ENCODE measurements at regions of chr4 and their contacts with region 1.

Region 1: GRCh38 chr4:186029571-186030398 is 39.2 kb upstream of the TLR3 start:
- DNase-seq: no peak
- H3K4me3 ChIP-seq: peak overlapping the region; percentile 20 to 37 (median 29)
- H3K27ac ChIP-seq: peak overlapping the region; percentile 82 to 87 (median 86)
- H3K4me1 ChIP-seq: peaks cover 30 to 78% (median 76%) of the 10 kb centered on the region in 4 donors
- H3K27me3 ChIP-seq: no peaks in the 10 kb centered on the region
- CTCF ChIP-seq: no peak
- EP300 ChIP-seq: peak; percentile 5
- POLR2A ChIP-seq: no peak

Region 2: DNA sequence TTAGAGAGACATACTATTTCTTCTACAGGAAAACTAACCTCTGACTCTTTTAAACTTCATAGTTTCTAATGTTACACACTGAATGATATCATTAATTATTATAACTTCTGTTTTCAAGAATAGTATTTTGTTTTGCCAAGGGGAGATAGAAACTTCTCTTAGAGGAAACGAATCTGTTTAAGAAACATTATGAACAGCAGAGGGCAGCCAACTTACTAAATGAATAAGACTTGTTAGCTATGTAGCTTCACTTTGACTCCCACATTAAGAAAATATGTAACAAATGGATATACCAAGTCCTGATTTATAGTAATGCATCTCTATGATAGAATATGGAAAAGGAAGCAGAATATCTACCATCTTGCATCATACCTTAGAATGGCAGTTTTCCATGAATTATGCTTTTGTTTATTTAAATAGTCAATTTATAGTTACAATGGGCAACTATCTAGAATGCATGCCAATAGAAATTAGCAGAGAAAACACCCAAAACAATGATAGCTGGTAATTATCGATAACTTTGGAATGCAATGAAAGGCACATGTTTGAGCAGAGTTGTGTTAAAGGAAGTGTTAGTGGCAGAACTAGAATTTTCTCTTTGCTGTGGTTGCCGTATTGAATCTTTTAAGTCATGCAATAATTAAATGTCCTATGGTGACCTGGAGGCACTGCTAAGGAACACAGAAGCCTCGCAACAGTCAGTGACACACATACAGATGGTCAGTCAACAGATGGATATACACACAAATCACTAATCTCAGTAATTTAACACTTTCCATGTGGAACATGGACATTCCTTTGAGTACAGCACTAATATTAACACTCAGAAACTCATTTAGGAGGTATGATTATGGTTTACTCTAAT is 388.7 kb before region 1 on chr4:
- intact Hi-C with region 1: loop called (anchors 5 kb)
- DNase-seq: no peak
- H3K4me3 ChIP-seq: no peak overlapping the region
- H3K27ac ChIP-seq: peak overlapping the region in 2 of 4 donors; percentile 6 to 7
- H3K4me1 ChIP-seq: peaks cover 6 to 30% (median 15%) of the 10 kb centered on the region in 4 donors
- H3K27me3 ChIP-seq: no peaks in the 10 kb centered on the region
- CTCF ChIP-seq: peak; percentile 46 to 54 (median 51)
- EP300 ChIP-seq: no peak
- POLR2A ChIP-seq: no peak

Region 3: GRCh38 chr4:185730387-185730786 is 299.4 kb before region 1 on chr4:
- intact Hi-C with region 1: loop called (anchors 2 kb)
- DNase-seq: peak; percentile 86
- H3K4me3 ChIP-seq: no peak overlapping the region
- H3K27ac ChIP-seq: peak overlapping the region; percentile 77 to 89 (median 85)
- H3K4me1 ChIP-seq: peaks cover 58 to 93% (median 67%) of the 10 kb centered on the region in 4 donors
- H3K27me3 ChIP-seq: no peaks in the 10 kb centered on the region
- CTCF ChIP-seq: no peak
- EP300 ChIP-seq: no peak
- POLR2A ChIP-seq: no peak

Measured in esophagus muscularis mucosa (tissue), 4 donors.